ENCODE measurements at regions of chr1 and their contacts with region 1.

Region 1: GRCh38 chr1:91774520-91775203 is 111.3 kb downstream of the TGFBR3 start:
- DNase-seq: no peak
- ATAC-seq: no peak
- H3K4me3 ChIP-seq: no peak overlapping the region
- H3K27ac ChIP-seq: no peak overlapping the region
- H3K4me1 ChIP-seq: no peaks in the 10 kb centered on the region
- H3K27me3 ChIP-seq: no peaks in the 10 kb centered on the region
- CTCF ChIP-seq: no peak
- EP300 ChIP-seq: no peak
- POLR2A ChIP-seq: no peak
- RAD21 ChIP-seq: no peak

Region 2: GRCh38 chr1:91591175-91591968 is 183.3 kb before region 1 on chr1:
- CTCF ChIA-PET with region 1: no interaction called
- POLR2A ChIA-PET with region 1: no interaction called
- RAD21 ChIA-PET with region 1: no interaction called
- SMC1A ChIA-PET with region 1: no interaction called
- in situ Hi-C with region 1: no loop called
- intact Hi-C with region 1: no loop called
- DNase-seq: no peak
- ATAC-seq: no peak
- H3K4me3 ChIP-seq: no peak overlapping the region
- H3K27ac ChIP-seq: no peak overlapping the region
- H3K4me1 ChIP-seq: peaks cover 6% of the 10 kb centered on the region; the same call in 1 of the 2 replicates
- H3K27me3 ChIP-seq: no peaks in the 10 kb centered on the region; a peak in 1 of 4 replicates
- CTCF ChIP-seq: no peak
- EP300 ChIP-seq: no peak
- POLR2A ChIP-seq: no peak
- RAD21 ChIP-seq: no peak

Region 3: DNA sequence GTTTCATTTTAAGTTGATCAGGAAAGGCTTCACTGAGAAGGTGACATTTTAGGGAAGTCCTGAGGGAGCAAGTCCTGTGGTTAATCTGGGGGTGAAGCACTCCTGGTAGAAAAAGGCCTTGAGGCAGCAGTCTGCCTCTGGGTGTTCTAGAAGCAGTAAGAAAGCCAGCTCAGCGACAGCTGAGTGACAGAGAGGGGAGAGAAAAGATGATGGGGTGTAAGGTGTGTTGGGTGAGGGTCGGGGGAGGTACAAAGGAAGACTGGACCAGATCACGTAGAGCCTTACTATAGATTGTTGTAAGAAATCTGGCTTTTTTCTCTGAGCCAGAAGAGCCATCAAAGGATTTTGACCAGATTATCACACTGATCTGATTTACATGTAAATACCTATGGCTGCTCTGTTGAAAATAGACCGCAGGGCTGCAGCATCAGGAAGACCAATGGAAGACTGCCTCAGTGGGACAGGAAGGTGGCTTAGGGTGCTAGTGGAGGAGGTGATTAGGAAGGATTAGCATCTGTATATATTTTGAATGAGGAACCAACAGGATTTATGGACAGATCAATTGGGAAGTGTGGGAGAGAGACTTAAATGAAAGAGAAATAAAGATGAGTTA is 142.8 kb before region 1 on chr1:
- CTCF ChIA-PET with region 1: no interaction called
- POLR2A ChIA-PET with region 1: no interaction called
- RAD21 ChIA-PET with region 1: no interaction called
- SMC1A ChIA-PET with region 1: no interaction called
- in situ Hi-C with region 1: no loop called
- intact Hi-C with region 1: no loop called
- DNase-seq: no peak
- ATAC-seq: no peak
- H3K4me3 ChIP-seq: no peak overlapping the region
- H3K27ac ChIP-seq: no peak overlapping the region
- H3K4me1 ChIP-seq: no peaks in the 10 kb centered on the region
- H3K27me3 ChIP-seq: no peaks in the 10 kb centered on the region
- CTCF ChIP-seq: no peak
- EP300 ChIP-seq: no peak
- POLR2A ChIP-seq: no peak
- RAD21 ChIP-seq: no peak

Region 4: GRCh38 chr1:91791103-91791502 is 16.4 kb after region 1 on chr1:
- CTCF ChIA-PET with region 1: interaction called, 10 read pairs
- POLR2A ChIA-PET with region 1: no interaction called
- RAD21 ChIA-PET with region 1: no interaction called
- SMC1A ChIA-PET with region 1: interaction called, 3 read pairs
- in situ Hi-C with region 1: no loop called
- intact Hi-C with region 1: no loop called
- DNase-seq: no peak
- ATAC-seq: peak; percentile 69
- H3K4me3 ChIP-seq: no peak overlapping the region
- H3K27ac ChIP-seq: no peak overlapping the region
- H3K4me1 ChIP-seq: no peaks in the 10 kb centered on the region
- H3K27me3 ChIP-seq: no peaks in the 10 kb centered on the region
- CTCF ChIP-seq: 0 out of 6 replicates have a peak, but pooled peaks of 1 of the 3 experiments have one; percentile 10
- EP300 ChIP-seq: no peak
- POLR2A ChIP-seq: no peak
- RAD21 ChIP-seq: peak; percentile 49; the same call in 1 of the 2 replicates

Measured in GM12878 (cell line).